IMR-90 (cell line): ENCODE measurements at regions of chr5 and their contacts with region 1.

Region 1: GRCh38 chr5:9698125-9698826 is 68.1 kb upstream of the TAS2R1 start:
- DNase-seq: peak; percentile 71
- ATAC-seq: peak; percentile 83
- H3K4me3 ChIP-seq: no peak overlapping the region
- H3K27ac ChIP-seq: peak overlapping the region; percentile 24; the same call in 1 of the 2 replicates
- H3K4me1 ChIP-seq: peaks cover 5% of the 10 kb centered on the region; the same call in 1 of the 2 replicates
- H3K27me3 ChIP-seq: no peaks in the 10 kb centered on the region
- CTCF ChIP-seq: no peak
- POLR2A ChIP-seq: no peak
- RAD21 ChIP-seq: no peak

Region 2: DNA sequence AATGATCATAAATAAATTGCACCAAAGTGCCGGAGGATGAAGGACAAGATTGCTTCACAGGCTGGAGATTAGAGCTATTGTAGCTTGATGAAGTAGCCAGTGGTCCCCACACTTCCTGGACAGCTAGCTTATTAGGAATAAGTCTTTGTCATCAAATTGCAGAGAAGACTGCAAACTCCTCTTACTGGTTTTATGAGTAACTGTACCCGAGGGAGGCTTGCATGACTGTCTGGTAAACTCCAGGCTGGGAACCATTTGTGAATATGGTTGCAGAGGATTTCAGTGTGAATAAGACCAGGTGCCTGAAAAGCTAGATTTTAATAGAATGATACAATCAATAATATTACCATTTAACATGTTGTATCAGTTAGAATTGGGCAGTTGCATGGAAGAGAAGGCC is 115.9 kb before region 1 on chr5:
- CTCF ChIA-PET with region 1: no interaction called
- POLR2A ChIA-PET with region 1: no interaction called
- dilution Hi-C with region 1: no loop called
- in situ Hi-C with region 1: no loop called
- intact Hi-C with region 1: no loop called
- DNase-seq: peak; percentile 18
- ATAC-seq: no peak
- H3K4me3 ChIP-seq: no peak overlapping the region
- H3K27ac ChIP-seq: no peak overlapping the region
- H3K4me1 ChIP-seq: no peaks in the 10 kb centered on the region
- H3K27me3 ChIP-seq: no peaks in the 10 kb centered on the region
- CTCF ChIP-seq: no peak
- POLR2A ChIP-seq: no peak
- RAD21 ChIP-seq: no peak

Region 3: GRCh38 chr5:9653811-9654210 is 44.5 kb before region 1 on chr5:
- CTCF ChIA-PET with region 1: no interaction called
- POLR2A ChIA-PET with region 1: no interaction called
- dilution Hi-C with region 1: no loop called
- in situ Hi-C with region 1: no loop called
- intact Hi-C with region 1: loop called (anchors 5 kb)
- DNase-seq: peak; percentile 97
- ATAC-seq: peak; percentile 95
- H3K4me3 ChIP-seq: no peak overlapping the region
- H3K27ac ChIP-seq: no peak overlapping the region
- H3K4me1 ChIP-seq: peaks cover 2% of the 10 kb centered on the region; the same call in 1 of the 2 replicates
- H3K27me3 ChIP-seq: no peaks in the 10 kb centered on the region
- CTCF ChIP-seq: no peak
- POLR2A ChIP-seq: no peak
- RAD21 ChIP-seq: peak; percentile 24; the same call in 1 of the 2 replicates

Region 4: DNA sequence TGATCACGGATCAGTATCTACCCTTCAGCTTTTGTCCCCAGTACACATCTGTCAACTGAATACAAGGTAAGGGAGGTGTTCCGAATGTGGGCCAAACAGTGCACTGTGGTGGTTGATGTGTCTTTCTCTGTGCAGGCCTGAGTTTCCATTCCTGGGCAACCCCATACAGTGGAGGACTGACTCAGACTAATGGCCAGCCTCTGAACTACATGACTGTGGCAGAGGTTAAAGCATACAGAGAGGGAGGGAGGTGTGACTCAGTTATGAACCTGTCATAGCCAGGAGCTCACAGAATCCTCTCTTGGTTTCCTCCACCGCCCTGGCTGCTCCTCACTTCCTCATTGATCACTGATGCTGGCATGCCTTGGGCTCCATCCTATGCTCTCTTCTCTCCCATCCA is 68.3 kb after region 1 on chr5:
- CTCF ChIA-PET with region 1: no interaction called
- POLR2A ChIA-PET with region 1: no interaction called
- dilution Hi-C with region 1: no loop called
- in situ Hi-C with region 1: no loop called
- intact Hi-C with region 1: no loop called
- DNase-seq: peak; percentile 81
- ATAC-seq: peak; percentile 87
- H3K4me3 ChIP-seq: no peak overlapping the region
- H3K27ac ChIP-seq: no peak overlapping the region
- H3K4me1 ChIP-seq: peaks cover 4% of the 10 kb centered on the region; the same call in 1 of the 2 replicates
- H3K27me3 ChIP-seq: no peaks in the 10 kb centered on the region
- CTCF ChIP-seq: peak; percentile 36
- POLR2A ChIP-seq: no peak
- RAD21 ChIP-seq: peak; percentile 59